PC-9 (cell line): ENCODE measurements at regions of chr10 and their contacts with region 1.

Region 1: GRCh38 chr10:114304017-114304570 is 65.0 kb downstream of the VWA2 start:
- DNase-seq: peak in 1 of 2 experiments; percentile 51
- H3K4me3 ChIP-seq: no peak overlapping the region
- H3K27ac ChIP-seq: no peak overlapping the region
- H3K4me1 ChIP-seq: peaks cover 9% of the 10 kb centered on the region
- H3K27me3 ChIP-seq: no peaks in the 10 kb centered on the region
- CTCF ChIP-seq: peak; percentile 77

Region 2: DNA sequence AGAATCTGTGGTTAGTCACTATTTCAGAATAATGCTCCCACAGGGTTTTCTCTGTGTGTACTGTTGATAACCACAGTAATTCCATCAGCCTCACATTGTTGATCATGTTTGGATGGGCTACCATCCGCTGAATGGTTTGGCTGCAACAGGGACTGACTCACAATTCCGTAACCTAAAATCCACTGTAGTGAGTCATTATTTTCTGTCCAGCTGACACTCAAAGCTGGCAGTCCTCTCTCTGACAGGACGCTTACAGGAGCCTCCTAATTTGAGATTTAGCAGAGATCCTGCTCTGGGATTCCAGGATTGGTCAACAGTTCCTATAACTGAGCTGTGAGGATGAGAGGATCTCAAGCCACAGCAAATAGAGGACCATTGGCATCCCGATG is 32.3 kb before region 1 on chr10:
- CTCF ChIA-PET with region 1: no interaction called
- POLR2A ChIA-PET with region 1: no interaction called
- intact Hi-C with region 1: no loop called
- DNase-seq: peak; percentile 40 to 80
- H3K4me3 ChIP-seq: no peak overlapping the region
- H3K27ac ChIP-seq: no peak overlapping the region
- H3K4me1 ChIP-seq: 0 out of 2 replicates have a peak, but pooled peaks cover 10% of the 10 kb centered on the region
- H3K27me3 ChIP-seq: no peaks in the 10 kb centered on the region
- CTCF ChIP-seq: no peak

Region 3: GRCh38 chr10:114346271-114347031 is 42.4 kb after region 1 on chr10:
- CTCF ChIA-PET with region 1: no interaction called
- POLR2A ChIA-PET with region 1: interaction called, 10 read pairs
- intact Hi-C with region 1: loop called (anchors 1 kb)
- DNase-seq: peak in 1 of 2 experiments; percentile 68
- H3K4me3 ChIP-seq: no peak overlapping the region
- H3K27ac ChIP-seq: no peak overlapping the region
- H3K4me1 ChIP-seq: no peaks in the 10 kb centered on the region
- H3K27me3 ChIP-seq: no peaks in the 10 kb centered on the region
- CTCF ChIP-seq: no peak

Region 4: GRCh38 chr10:114403541-114404161 is 99.6 kb after region 1 on chr10:
- CTCF ChIA-PET with region 1: interaction called, 6 read pairs
- POLR2A ChIA-PET with region 1: no interaction called
- intact Hi-C with region 1: loop called (anchors 2 kb)
- DNase-seq: peak in 1 of 2 experiments; percentile 36
- H3K4me3 ChIP-seq: peak overlapping the region; percentile 75
- H3K27ac ChIP-seq: peak overlapping the region; percentile 46
- H3K4me1 ChIP-seq: peaks cover 32% of the 10 kb centered on the region
- H3K27me3 ChIP-seq: no peaks in the 10 kb centered on the region
- CTCF ChIP-seq: peak; percentile 37; the same call in 1 of the 2 replicates

Region 5: GRCh38 chr10:114541081-114541796 is 237.1 kb after region 1 on chr10:
- CTCF ChIA-PET with region 1: no interaction called
- POLR2A ChIA-PET with region 1: no interaction called
- intact Hi-C with region 1: loop called (anchors 1 kb)
- DNase-seq: peak; percentile 39 to 51
- H3K4me3 ChIP-seq: no peak overlapping the region
- H3K27ac ChIP-seq: no peak overlapping the region
- H3K4me1 ChIP-seq: peaks cover 16% of the 10 kb centered on the region
- H3K27me3 ChIP-seq: no peaks in the 10 kb centered on the region
- CTCF ChIP-seq: no peak

Region 6: GRCh38 chr10:114779803-114780609 is 475.9 kb after region 1 on chr10:
- CTCF ChIA-PET with region 1: no interaction called
- POLR2A ChIA-PET with region 1: no interaction called
- intact Hi-C with region 1: loop called (anchors 10 kb)
- DNase-seq: peak in 1 of 2 experiments; percentile 81
- H3K4me3 ChIP-seq: no peak overlapping the region
- H3K27ac ChIP-seq: peak overlapping the region; percentile 74
- H3K4me1 ChIP-seq: peaks cover 22% of the 10 kb centered on the region
- H3K27me3 ChIP-seq: no peaks in the 10 kb centered on the region
- CTCF ChIP-seq: no peak